ENCODE measurements at regions of chr5 and their contacts with region 1.

Region 1: DNA sequence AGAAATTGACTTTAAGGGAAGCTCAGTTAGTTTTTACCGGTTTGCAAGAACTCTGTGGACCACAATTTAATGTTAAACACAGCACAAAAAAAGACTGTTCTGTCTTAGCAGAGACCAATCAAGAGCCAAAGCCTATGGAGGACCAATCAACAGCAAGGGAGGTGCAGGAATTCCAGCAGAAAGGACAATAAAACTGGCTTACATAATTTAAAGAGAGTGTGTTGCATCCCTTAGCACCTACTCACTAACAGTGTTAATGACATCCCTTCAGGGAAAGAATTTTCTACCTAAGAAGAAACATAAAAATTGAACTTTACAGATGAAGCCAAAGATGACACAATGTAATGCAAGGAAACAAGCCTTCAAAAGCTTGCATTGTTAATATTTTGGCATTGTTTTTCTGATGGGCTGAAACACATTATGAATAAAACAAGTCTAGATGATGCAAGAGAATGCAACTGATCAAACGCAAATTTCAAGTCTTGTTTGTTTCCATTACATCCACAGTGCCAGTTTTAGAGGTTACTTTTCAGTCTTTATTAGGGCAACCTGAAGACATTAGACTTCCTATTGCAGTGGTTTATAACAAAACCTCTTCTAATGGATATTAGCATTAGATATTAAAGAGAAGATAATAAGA is 111.3 kb upstream of the FST start:
- DNase-seq: no peak
- ATAC-seq: no peak
- H3K4me3 ChIP-seq: no peak overlapping the region
- H3K27ac ChIP-seq: no peak overlapping the region
- H3K4me1 ChIP-seq: no peaks in the 10 kb centered on the region
- H3K27me3 ChIP-seq: no peaks in the 10 kb centered on the region
- CTCF ChIP-seq: no peak
- POLR2A ChIP-seq: no peak
- RAD21 ChIP-seq: no peak

Region 2: GRCh38 chr5:53386341-53386740 is 17.3 kb after region 1 on chr5:
- CTCF ChIA-PET with region 1: no interaction called
- POLR2A ChIA-PET with region 1: no interaction called
- RAD21 ChIA-PET with region 1: no interaction called
- intact Hi-C with region 1: loop called (anchors 1 kb)
- DNase-seq: no peak
- ATAC-seq: no peak
- H3K4me3 ChIP-seq: no peak overlapping the region
- H3K27ac ChIP-seq: no peak overlapping the region
- H3K4me1 ChIP-seq: no peaks in the 10 kb centered on the region
- H3K27me3 ChIP-seq: no peaks in the 10 kb centered on the region
- CTCF ChIP-seq: no peak
- POLR2A ChIP-seq: no peak
- RAD21 ChIP-seq: no peak

Region 3: DNA sequence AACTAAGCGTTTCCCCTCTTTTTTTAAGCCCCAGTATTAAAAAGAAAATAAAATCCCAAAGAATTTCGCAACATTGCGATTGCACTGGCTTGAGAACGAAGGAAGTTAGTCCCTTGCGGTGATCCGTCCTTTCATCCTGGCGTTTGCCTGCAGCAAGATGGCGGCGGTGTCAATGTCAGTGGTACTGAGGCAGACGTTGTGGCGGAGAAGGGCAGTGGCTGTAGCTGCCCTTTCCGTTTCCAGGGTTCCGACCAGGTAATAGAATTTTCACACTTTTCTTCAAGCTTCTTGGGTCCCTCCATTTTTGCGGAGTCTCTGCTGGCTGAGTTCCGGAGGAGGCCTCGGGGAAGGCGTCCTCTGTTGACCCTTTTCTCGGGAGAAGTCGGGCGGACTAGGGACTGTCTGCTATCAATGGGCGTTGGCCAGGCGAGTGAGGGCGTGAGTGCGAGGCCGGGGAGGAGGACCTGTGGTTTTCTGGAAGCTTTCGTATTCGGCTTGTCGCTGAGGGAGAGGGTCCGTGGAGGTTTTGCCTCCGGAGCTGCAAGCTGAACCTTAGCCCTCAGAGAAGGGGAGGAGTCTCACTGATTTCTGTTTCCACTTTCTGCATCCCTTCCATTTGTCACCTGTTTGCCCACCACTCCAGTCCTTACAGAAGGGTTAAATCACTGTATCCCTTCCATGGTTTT is 191.6 kb after region 1 on chr5 and contains the start of gene NDUFS4:
- CTCF ChIA-PET with region 1: no interaction called
- POLR2A ChIA-PET with region 1: no interaction called
- RAD21 ChIA-PET with region 1: no interaction called
- intact Hi-C with region 1: no loop called
- DNase-seq: peak; percentile 84
- ATAC-seq: peak; percentile 92
- H3K4me3 ChIP-seq: peak within 1 kb of the TSS; percentile 85 to 90
- H3K27ac ChIP-seq: peak within 1 kb of the TSS; percentile 59
- H3K4me1 ChIP-seq: peaks cover 0 to 10% of the 10 kb centered on the region in 2 experiments; a peak in 3 of 4 replicates
- H3K27me3 ChIP-seq: no peaks in the 10 kb centered on the region
- CTCF ChIP-seq: no peak
- POLR2A ChIP-seq: peak; percentile 65
- RAD21 ChIP-seq: no peak
- total RNA-seq, gene NDUFS4: 91.4 TPM

Region 4: GRCh38 chr5:54646356-54647101 is 1277.4 kb after region 1 on chr5:
- CTCF ChIA-PET with region 1: no interaction called
- POLR2A ChIA-PET with region 1: no interaction called
- RAD21 ChIA-PET with region 1: no interaction called
- intact Hi-C with region 1: no loop called
- DNase-seq: no peak
- ATAC-seq: no peak
- H3K4me3 ChIP-seq: no peak overlapping the region
- H3K27ac ChIP-seq: no peak overlapping the region
- H3K4me1 ChIP-seq: peaks cover 4 to 24% of the 10 kb centered on the region in 2 experiments; a peak in 3 of 4 replicates
- H3K27me3 ChIP-seq: no peaks in the 10 kb centered on the region
- CTCF ChIP-seq: no peak
- POLR2A ChIP-seq: no peak
- RAD21 ChIP-seq: no peak

Measured in HCT116 (cell line).